CD4-positive, alpha-beta T cell (primary cell): ENCODE measurements at regions of chr14 and their contacts with region 1.

Region 1: GRCh38 chr14:55654243-55654642 is 74.2 kb downstream of the KTN1 start:
- DNase-seq: no peak
- ATAC-seq: no peak
- H3K4me3 ChIP-seq: no peak overlapping the region
- H3K4me3 Mint-ChIP-seq: no peak overlapping the region
- H3K27ac ChIP-seq: no peak overlapping the region
- H3K27ac Mint-ChIP-seq: no peak overlapping the region
- H3K4me1 ChIP-seq: no peaks in the 10 kb centered on the region
- H3K4me1 Mint-ChIP-seq: no peaks in the 10 kb centered on the region
- H3K27me3 ChIP-seq: no peaks in the 10 kb centered on the region
- H3K27me3 Mint-ChIP-seq: no peaks in the 10 kb centered on the region
- CTCF ChIP-seq: no peak

Region 2: DNA sequence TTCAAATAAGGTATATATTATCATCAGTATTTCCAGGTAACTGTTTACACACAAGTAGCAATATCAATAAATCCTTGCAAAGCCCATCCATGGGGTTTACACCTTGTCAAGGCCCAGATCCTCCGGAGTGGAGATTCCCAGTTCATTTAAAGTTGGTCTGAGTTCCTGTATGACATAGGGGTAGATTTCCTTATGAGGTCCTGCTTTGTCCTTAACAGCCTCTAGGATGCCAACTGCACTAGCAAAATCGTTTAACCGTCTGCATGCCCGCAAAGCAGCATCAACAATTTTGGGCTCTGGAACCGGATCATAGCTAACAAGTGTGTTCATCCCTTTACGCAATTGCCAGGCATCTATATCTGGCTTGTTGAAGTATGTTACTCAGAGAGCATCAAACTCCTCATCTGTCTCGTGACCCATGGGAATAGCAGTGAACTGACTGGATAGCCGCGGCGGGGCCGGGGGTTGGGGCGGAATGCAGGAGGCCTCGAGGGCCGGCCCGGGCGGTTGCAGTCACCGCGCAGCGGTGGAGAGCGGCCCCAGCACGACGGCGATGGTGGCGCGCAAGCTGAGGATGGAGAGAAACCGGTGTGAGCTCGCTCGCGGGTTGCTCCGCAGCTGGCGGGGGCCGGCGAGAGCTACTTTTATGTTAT is 413.6 kb before region 1 on chr14:
- CTCF ChIA-PET with region 1: no interaction called
- POLR2A ChIA-PET with region 1: no interaction called
- intact Hi-C with region 1: no loop called
- DNase-seq: no peak
- ATAC-seq: no peak
- H3K4me3 ChIP-seq: no peak overlapping the region
- H3K4me3 Mint-ChIP-seq: no peak overlapping the region
- H3K27ac ChIP-seq: no peak overlapping the region
- H3K27ac Mint-ChIP-seq: no peak overlapping the region
- H3K4me1 ChIP-seq: no peaks in the 10 kb centered on the region
- H3K4me1 Mint-ChIP-seq: no peaks in the 10 kb centered on the region
- H3K27me3 ChIP-seq: no peaks in the 10 kb centered on the region
- H3K27me3 Mint-ChIP-seq: peaks cover 11% of the 10 kb centered on the region
- CTCF ChIP-seq: no peak

Region 3: GRCh38 chr14:55446218-55446654 is 208.0 kb before region 1 on chr14:
- CTCF ChIA-PET with region 1: no interaction called
- POLR2A ChIA-PET with region 1: no interaction called
- intact Hi-C with region 1: loop called in 1 of 2 experiments (anchors 10 kb)
- DNase-seq: peak; percentile 12 to 80 (median 36)
- ATAC-seq: no peak
- H3K4me3 ChIP-seq: no peak overlapping the region
- H3K4me3 Mint-ChIP-seq: no peak overlapping the region
- H3K27ac ChIP-seq: no peak overlapping the region
- H3K27ac Mint-ChIP-seq: no peak overlapping the region
- H3K4me1 ChIP-seq: no peaks in the 10 kb centered on the region
- H3K4me1 Mint-ChIP-seq: no peaks in the 10 kb centered on the region
- H3K27me3 ChIP-seq: no peaks in the 10 kb centered on the region
- H3K27me3 Mint-ChIP-seq: no peaks in the 10 kb centered on the region
- CTCF ChIP-seq: peak; percentile 68